ENCODE measurements at regions of chr2 and their contacts with region 1.

Region 1: DNA sequence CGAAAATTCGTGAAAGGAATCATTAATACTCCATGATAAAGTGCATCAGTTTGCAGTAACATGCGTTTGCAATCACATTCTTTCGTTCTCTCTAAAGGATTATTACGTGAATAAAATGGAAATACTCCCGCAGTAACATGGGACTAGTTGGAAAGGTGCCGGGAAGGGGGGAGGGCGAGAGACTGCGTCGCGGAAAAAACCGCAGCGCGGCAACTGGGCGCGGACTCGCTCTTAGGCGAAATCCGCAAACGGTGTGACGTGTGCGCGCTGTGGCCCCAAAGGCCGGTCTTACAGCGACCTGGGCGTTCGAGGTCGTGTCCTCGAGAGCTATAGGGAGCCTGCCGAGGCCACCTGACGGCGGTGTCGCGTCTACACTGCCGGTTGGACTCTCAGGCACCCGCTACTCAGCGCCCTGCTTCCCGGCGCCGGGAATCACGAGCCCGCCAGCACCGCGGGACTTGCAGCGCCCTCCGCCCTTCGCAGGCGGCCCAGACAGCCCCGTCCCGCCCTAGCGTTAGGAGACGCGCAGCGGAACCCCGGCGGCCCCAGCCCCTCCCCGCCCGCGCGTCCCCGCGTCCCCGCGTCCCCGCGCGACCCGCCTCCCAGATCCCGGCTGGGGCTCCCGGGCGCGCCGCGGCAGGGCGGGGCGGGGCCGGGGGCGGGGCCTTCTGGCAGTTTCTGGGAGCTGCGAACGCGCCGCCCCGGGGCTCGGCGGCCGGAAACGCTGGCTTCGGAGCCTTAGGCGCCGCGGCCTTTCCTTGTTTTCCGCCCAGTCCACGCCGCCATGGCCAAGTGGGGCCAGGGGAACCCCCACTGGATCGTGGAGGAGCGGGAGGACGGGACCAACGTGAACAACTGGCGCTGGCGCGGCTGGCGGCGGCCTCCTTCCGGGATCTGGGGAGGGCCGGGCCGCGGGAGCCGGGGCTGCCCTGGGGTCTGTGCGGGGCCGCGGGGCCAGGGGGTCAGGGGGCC is 15.1 kb downstream of the C2orf74 start:
- DNase-seq: peak; percentile 92
- H3K4me3 Mint-ChIP-seq: peak overlapping the region; percentile 92
- H3K27ac Mint-ChIP-seq: peak overlapping the region; percentile 83
- H3K4me1 Mint-ChIP-seq: peaks cover 43% of the 10 kb centered on the region
- H3K27me3 Mint-ChIP-seq: peaks cover 6% of the 10 kb centered on the region

Region 2: GRCh38 chr2:60693551-60693950 is 483.5 kb before region 1 on chr2:
- intact Hi-C with region 1: no loop called
- DNase-seq: no peak
- H3K4me3 Mint-ChIP-seq: no peak overlapping the region
- H3K27ac Mint-ChIP-seq: no peak overlapping the region
- H3K4me1 Mint-ChIP-seq: no peaks in the 10 kb centered on the region
- H3K27me3 Mint-ChIP-seq: peaks cover 14% of the 10 kb centered on the region

Region 3: GRCh38 chr2:60806988-60807681 is 369.9 kb before region 1 on chr2:
- intact Hi-C with region 1: loop called (anchors 5 kb)
- DNase-seq: no peak
- H3K4me3 Mint-ChIP-seq: peak overlapping the region; percentile 10
- H3K27ac Mint-ChIP-seq: peak overlapping the region; percentile 89
- H3K4me1 Mint-ChIP-seq: peaks cover 48% of the 10 kb centered on the region
- H3K27me3 Mint-ChIP-seq: no peaks in the 10 kb centered on the region

Region 4: GRCh38 chr2:61023670-61024069 is 153.4 kb before region 1 on chr2:
- intact Hi-C with region 1: no loop called
- DNase-seq: no peak
- H3K4me3 Mint-ChIP-seq: no peak overlapping the region
- H3K27ac Mint-ChIP-seq: no peak overlapping the region
- H3K4me1 Mint-ChIP-seq: peaks cover 11% of the 10 kb centered on the region
- H3K27me3 Mint-ChIP-seq: no peaks in the 10 kb centered on the region

Region 5: DNA sequence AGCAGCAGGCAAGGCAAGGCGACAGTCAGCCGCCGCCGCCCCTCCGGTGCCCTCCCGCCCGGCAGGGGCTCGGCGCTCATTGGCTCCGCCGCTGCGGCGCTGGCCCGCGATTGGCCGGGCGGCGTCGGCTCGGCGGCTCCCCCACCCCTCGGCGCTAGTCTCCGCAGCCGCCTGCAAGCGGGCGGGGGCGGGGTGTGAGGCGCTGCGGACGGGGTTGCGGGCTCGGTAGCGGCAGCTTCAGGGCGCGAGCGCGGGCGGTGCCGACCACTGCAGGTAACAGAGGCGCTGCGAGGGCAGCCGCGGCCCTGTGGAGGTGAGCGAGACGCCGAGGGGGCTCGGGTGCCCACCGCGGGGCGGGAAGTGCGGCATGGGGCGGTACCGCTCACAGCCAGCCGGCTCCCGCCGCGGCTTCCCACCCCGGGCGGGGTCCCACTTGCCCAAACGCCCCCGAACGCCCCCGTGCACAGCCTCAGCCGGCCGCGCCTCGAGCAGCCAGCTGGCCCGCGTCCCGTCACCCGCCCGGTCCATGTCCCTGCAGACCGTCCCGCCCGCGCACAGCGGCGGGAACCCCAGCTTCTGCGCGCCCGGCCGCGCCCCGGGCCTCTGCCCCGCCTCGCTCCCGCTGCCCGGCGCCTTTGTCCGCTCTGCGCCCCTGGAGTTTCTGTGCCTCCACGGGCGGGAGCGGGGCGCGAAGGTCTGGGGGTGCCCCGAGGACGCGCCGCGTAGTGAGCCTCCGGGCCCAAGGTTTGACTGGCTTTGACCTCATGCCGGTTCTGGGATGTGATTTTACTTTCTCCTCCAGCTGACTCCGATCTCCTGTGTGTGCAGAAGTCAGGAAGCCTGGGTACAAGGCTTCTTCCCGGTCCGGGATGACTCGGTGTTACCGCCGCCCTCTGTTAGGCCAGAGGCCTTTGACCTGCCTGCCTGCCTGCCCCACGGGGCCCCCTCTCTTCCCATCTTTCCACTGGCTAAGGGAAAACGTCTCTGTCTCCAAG is 111.0 kb before region 1 on chr2 and contains the start of gene SANBR:
- intact Hi-C with region 1: loop called (anchors 2 kb)
- DNase-seq: peak; percentile 84
- H3K4me3 Mint-ChIP-seq: peak within 1 kb of the TSS; percentile 94
- H3K27ac Mint-ChIP-seq: peak within 1 kb of the TSS; percentile 85
- H3K4me1 Mint-ChIP-seq: peaks cover 12% of the 10 kb centered on the region
- H3K27me3 Mint-ChIP-seq: no peaks in the 10 kb centered on the region
- total RNA-seq, gene SANBR: 8.2 and 9.4 TPM in 2 replicates

Region 6: GRCh38 chr2:61340242-61340641 is 163.2 kb after region 1 on chr2:
- intact Hi-C with region 1: no loop called
- DNase-seq: no peak
- H3K4me3 Mint-ChIP-seq: no peak overlapping the region
- H3K27ac Mint-ChIP-seq: no peak overlapping the region
- H3K4me1 Mint-ChIP-seq: peaks cover 7% of the 10 kb centered on the region
- H3K27me3 Mint-ChIP-seq: no peaks in the 10 kb centered on the region

Region 7: DNA sequence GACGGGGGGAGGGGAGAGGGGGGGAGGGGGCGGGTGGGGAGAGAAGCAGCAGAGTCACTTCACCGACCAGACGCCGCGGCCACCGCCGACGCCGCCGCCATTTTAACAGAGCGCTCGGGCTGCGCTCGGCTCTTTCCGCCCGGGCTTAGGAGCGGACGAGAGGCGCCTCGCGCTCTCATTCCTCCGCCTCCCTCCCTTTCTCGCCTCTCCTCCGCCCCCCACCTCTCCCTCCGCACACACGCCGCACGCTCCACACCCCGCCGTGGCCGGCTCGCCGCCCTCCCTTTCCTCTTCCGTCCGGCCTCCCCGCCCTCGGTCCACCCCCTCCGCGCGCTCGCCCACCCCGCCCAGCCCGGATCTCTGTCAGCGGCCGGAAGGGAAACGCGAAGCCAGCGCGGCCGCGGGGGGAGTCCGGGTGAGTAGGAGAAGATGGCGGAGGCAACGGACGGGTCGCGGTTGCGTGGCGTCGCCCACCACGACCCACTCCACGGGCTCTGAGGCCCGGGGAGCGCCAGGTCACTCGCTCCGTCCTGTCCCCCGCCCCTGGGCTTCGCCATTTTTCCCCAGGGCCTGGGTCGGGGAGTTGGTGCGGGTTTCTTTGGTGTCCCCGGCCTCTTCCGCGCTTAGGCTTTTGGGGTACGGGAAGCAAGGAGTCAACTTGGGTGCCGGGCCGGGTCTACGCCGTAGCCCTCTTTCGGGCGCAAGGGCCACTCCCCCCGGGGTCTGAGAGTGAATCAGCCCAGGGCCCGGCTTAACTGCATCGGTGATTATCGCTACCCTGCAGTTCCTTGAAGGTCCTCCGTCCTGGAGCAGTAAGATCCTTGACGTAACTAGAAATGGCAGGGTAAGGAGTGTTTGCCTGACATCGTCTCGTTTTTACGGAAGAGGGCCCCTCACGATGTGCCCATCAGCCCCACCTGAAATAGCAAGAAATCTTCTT is 294.2 kb after region 1 on chr2 and contains the start of gene USP34:
- intact Hi-C with region 1: loop called (anchors 2 kb)
- DNase-seq: peak; percentile 91
- H3K4me3 Mint-ChIP-seq: peak within 1 kb of the TSS; percentile 92
- H3K27ac Mint-ChIP-seq: peak within 1 kb of the TSS; percentile 93
- H3K4me1 Mint-ChIP-seq: peaks cover 24% of the 10 kb centered on the region
- H3K27me3 Mint-ChIP-seq: no peaks in the 10 kb centered on the region
- total RNA-seq, gene USP34: 87.4 and 89.3 TPM in 2 replicates

Region 8: DNA sequence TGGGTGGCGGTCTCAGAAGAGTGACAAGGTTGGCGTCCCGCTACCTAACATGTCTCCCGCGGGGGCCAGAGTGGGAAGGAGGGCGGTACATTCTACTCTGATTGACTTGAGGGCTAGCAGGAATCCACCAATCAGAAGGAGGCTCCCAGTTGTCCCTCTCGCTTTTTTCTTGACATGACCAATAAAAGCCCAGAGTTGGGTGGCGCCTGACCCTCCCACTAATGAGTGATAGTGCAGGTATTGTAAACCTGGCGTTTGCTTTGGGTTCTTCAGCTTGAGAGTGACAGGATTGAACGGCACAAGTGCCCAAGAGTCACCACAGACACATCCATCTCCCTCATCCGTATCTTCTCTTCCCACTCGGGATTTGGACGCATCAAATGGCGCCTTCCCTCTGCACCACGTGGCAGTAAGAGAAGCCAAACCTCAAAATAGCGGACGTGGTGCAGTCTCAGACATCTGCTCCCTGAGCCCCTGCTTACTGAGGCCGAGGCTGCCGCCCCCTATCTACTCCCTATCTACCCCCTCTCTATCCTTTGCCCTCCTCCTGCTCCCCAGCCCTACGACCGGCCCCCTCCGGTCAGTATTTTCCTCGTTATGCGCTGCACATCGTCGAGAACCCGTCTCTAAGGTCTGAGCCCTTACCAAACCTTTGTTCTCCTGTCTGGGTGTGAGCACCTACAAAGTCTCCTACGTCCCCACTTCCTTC is 677.6 kb after region 1 on chr2:
- intact Hi-C with region 1: loop called (anchors 1 kb)
- DNase-seq: peak; percentile 87
- H3K4me3 Mint-ChIP-seq: peak overlapping the region; percentile 89
- H3K27ac Mint-ChIP-seq: peak overlapping the region; percentile 88
- H3K4me1 Mint-ChIP-seq: peaks cover 16% of the 10 kb centered on the region
- H3K27me3 Mint-ChIP-seq: no peaks in the 10 kb centered on the region